Posterior vena cava (tissue), 2 donors: ENCODE measurements at regions of chr12 and their contacts with region 1.

Region 1: DNA sequence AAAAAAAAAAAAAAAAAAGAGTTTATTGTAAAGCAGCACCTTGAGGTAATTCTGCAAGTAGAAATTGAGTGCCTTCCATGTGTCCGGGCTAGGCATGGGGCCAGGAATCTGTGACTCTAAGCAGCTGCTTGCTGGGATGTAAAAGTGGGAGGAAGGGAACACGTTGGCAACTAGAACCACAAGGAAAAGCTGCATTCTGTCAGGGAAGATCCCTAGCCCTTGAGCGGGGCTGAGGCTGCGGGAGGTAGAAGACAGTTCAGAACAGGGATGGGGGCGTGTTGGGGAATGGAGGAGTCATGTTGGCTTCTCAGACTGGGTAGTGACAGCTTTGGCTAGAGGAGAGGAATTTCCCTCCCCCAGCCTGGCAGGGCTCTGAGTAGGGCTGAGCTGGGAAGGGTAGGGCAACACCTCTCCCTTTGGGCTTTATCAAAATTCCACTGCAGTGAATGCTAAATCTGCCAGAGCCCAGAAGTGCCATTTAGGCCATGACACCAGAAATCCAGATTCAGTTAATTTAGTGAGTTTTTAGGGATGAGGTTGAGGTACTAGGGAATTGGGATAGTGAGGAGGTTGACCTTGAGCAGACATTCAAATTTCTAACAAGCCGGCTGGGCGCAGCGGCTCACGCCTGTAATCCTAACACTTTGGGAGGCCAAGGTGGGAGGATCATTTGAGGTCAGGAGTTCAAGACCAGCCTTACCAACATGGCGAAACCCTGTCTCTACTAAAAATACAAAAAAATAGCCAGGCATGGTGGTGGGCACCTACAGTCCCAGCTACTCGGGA is 3.4 kb upstream of the TRAFD1 start:
- DNase-seq: peak; percentile 88

Region 2: DNA sequence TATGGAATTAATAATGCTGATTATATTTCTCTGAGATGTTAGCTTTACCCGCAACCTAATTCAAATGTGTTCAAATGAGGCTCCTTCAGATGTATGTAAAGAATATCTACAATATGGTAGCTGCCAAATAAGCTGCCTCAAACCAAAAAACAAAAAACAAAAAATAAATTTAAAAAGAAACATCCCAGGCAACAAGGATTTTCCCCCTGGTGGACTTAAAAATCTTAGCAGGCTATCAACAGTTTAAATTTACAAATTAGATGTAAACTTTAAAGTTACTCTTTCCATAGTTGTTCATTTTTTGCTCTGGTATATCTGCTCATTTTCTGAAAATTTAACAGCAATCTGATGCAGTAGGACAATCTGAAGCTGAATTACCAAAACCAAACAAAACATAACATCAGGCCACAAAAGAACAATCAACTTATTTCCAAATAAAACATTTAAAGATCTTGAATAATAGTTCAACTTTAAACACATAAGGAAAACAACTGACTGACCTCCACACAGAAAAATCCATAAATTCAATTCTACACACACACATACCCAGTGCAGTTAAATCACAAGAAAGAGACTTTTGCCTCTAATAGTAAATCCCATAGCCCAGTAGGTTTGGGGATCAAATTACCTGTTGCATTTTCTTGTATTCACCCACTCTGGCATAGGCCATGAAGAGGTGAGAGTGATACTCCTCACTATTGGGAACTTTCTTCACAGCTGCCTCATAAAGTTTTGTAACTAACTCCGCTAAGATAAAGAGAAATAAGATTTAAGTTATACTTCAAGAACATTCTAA is 34.7 kb before region 1 on chr12:
- intact Hi-C with region 1: no loop called
- DNase-seq: no peak

Region 3: GRCh38 chr12:112161711-112162110 is 39.7 kb after region 1 on chr12:
- intact Hi-C with region 1: loop called in 1 of 2 experiments (anchors 1 kb)
- DNase-seq: peak; percentile 66